Endothelial cell of umbilical vein (primary cell): ENCODE measurements at regions of chr6 and their contacts with region 1.

Region 1: GRCh38 chr6:43516697-43517504 is at the starts of genes POLR1C and YIPF3:
- DNase-seq: peak; percentile 98
- H3K4me3 ChIP-seq: peak within 1 kb of the TSS; percentile 81 to 94 (median 87)
- H3K27ac ChIP-seq: peak within 1 kb of the TSS; percentile 66
- H3K4me1 ChIP-seq: peaks cover 17% of the 10 kb centered on the region
- H3K27me3 ChIP-seq: no peaks in the 10 kb centered on the region
- CTCF ChIP-seq: no peak
- POLR2A ChIP-seq: peak; percentile 88
- total RNA-seq, gene POLR1C: 40.6 and 46.0 TPM in 2 replicates
- total RNA-seq, gene YIPF3: 117 and 119 TPM in 2 replicates

Region 2: DNA sequence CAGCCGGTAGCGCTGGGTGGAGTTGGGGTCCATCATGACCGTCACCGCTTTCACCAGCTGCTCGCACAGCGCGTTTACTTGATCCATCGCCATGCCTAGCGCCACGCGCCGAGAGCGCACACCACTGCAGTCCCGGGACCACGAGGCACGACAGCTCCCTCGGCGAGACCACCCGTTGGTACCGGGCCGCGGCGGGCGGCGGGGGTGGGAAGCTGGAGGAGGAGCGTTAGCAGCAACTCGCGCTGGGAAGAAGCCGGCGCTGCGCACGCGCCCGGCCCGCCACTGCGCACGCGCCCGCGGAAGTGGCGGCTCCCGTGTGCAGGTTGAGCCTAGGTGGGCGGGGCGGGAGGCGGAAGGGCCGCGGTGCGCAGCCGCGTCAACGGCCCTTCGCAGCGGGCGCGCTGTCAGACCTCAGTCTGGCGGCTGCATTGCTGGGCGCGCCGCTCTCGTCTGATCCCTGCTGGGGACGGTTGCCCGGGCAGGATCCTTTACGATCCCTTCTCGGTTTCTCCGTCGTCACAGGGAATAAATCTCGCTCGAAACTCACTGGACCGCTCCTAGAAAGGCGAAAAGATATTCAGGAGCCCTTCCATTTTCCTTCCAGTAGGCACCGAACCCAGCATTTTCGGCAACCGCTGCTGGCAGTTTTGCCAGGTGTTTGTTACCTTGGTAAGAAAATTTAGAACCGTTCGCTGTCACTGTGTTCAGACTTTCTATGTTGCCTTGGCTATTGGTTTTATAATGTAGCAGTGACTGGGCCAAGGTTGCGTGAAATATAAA is 59.1 kb after region 1 on chr6 and contains the starts of genes POLH and XPO5:
- CTCF ChIA-PET with region 1: no interaction called
- POLR2A ChIA-PET with region 1: interaction called, 3 read pairs
- dilution Hi-C with region 1: no loop called
- intact Hi-C with region 1: loop called (anchors 2 kb)
- DNase-seq: peak; percentile 96
- H3K4me3 ChIP-seq: peak within 1 kb of the TSS; percentile 76 to 89 (median 85)
- H3K27ac ChIP-seq: peak within 1 kb of the TSS; percentile 21
- H3K4me1 ChIP-seq: peaks cover 24% of the 10 kb centered on the region
- H3K27me3 ChIP-seq: no peaks in the 10 kb centered on the region
- CTCF ChIP-seq: no peak
- POLR2A ChIP-seq: peak; percentile 100
- total RNA-seq, gene POLH: 33.7 and 36.6 TPM in 2 replicates
- total RNA-seq, gene XPO5: 45.9 and 50.0 TPM in 2 replicates

Region 3: DNA sequence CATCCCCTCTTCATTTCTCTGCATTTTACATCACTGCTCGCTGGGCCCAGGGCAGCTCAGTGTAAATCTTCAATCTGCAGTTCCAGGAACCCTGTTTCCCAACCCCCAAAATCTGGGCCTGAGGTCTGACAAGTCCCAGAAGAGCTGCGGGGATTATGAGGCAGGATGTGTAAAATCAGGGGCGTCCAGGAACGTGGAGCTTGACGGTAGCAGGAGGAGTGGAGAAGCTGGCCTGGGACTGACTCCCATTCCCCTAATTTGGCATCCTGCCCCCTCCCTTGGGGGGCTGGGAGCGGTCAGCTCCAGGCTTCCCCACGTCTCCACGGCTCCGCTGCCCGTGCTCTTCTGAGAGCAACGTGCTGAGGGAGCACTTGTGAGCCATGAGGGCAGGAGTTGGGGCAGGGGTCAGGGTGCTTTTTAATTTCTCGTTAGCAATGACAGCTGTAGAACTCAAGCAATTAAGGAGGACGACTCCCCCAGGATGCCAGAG is 229.8 kb after region 1 on chr6:
- CTCF ChIA-PET with region 1: no interaction called
- POLR2A ChIA-PET with region 1: no interaction called
- dilution Hi-C with region 1: no loop called
- intact Hi-C with region 1: no loop called
- DNase-seq: no peak
- H3K4me3 ChIP-seq: no peak overlapping the region
- H3K27ac ChIP-seq: no peak overlapping the region
- H3K4me1 ChIP-seq: no peaks in the 10 kb centered on the region
- H3K27me3 ChIP-seq: no peaks in the 10 kb centered on the region
- CTCF ChIP-seq: no peak
- POLR2A ChIP-seq: no peak